ENCODE measurements at regions of chr11 and their contacts with region 1.

Region 1: DNA sequence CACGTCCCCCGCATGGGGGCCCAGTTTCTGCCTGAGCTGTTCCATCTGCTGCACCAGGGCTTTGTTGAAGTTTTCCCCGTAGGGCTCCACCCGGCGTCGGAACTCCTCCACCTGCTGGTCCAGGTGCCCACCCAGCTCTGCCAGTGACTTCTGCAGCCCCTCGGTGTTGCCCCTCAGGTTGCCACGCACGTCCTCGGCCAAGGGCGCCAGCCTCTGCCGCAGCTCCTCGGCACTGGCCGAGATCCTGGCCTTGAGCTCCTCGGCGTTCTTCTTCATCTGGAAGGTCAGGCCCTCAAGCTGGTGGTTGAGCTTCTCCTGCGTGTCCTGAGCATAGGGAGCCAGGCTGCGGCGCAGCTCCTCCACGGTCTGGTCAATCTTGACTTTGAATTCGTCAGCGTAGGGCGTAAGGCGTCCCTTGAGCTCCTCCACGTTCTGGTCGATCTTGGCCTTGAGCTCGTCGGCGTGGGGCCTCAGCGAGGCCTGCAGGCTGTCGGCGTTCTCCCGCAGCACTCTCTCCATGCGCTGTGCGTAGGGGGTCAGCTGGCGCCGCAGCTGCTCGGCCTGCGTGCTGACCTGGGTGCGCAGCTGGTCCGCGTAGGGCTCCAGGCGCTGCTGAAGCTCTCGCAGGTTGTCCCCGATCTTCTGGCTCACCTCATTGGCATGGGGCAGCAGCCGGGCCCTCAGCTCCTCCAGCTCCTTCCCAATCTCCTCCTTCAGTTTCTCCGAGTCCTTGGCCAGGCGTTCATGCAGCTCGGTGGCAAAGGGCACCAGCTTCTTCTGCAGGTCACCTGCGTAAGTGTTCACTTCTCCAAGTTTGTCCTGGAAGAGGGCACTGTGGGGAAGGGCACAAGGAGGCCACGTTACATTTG is 1.8 kb downstream of the APOA4 start:
- DNase-seq: no peak
- H3K4me3 ChIP-seq: no peak overlapping the region
- H3K27ac ChIP-seq: no peak overlapping the region
- H3K4me1 ChIP-seq: no peaks in the 10 kb centered on the region
- H3K27me3 ChIP-seq: no peaks in the 10 kb centered on the region
- CTCF ChIP-seq: no peak
- EP300 ChIP-seq: no peak
- RAD21 ChIP-seq: no peak

Region 2: DNA sequence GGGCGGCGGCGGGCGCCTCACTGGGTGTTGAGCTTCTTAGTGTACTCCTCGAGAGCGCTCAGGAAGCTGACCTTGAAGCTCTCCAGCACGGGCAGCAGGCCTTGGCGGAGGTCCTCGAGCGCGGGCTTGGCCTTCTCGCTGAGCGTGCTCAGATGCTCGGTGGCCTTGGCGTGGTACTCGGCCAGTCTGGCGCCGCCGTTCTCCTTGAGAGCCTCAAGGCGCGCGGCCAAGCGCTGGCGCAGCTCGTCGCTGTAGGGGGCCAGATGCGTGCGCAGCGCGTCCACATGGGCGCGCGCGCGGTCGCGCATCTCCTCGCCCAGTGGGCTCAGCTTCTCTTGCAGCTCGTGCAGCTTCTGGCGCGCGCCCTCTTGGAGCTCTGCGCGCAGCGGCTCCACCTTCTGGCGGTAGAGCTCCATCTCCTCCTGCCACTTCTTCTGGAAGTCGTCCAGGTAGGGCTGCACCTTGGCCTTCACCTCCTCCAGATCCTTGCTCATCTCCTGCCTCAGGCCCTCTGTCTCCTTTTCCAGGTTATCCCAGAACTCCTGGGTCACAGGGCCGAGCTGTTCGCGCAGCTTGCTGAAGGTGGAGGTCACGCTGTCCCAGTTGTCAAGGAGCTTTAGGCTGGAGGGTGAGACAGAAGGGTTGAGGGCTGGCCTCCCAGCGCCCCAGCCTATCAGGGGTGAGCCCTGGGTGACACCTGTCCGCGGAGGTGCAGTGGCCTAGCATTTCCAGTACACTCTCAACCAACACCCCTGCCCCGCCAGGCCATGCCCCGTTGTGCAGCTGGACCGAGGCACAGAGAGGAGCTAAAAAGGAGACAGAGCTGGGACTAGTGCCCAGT is 14.7 kb after region 1 on chr11:
- CTCF ChIA-PET with region 1: interaction called, 13 read pairs
- POLR2A ChIA-PET with region 1: no interaction called
- DNase-seq: peak; percentile 84
- H3K4me3 ChIP-seq: peak overlapping the region in 1 of 2 experiments; percentile 23; a peak in 1 of 4 replicates
- H3K27ac ChIP-seq: no peak overlapping the region
- H3K4me1 ChIP-seq: peaks cover 0 to 14% of the 10 kb centered on the region in 2 experiments; a peak in 1 of 4 replicates
- H3K27me3 ChIP-seq: no peaks in the 10 kb centered on the region
- CTCF ChIP-seq: peak; percentile 55
- EP300 ChIP-seq: no peak
- RAD21 ChIP-seq: peak; percentile 56